ENCODE measurements at regions of chr1 and their contacts with region 1.

Region 1: GRCh38 chr1:162854245-162854882 is 6.6 kb downstream of the CCDC190 start:
- DNase-seq: peak; percentile 50
- ATAC-seq: peak; percentile 73

Region 2: DNA sequence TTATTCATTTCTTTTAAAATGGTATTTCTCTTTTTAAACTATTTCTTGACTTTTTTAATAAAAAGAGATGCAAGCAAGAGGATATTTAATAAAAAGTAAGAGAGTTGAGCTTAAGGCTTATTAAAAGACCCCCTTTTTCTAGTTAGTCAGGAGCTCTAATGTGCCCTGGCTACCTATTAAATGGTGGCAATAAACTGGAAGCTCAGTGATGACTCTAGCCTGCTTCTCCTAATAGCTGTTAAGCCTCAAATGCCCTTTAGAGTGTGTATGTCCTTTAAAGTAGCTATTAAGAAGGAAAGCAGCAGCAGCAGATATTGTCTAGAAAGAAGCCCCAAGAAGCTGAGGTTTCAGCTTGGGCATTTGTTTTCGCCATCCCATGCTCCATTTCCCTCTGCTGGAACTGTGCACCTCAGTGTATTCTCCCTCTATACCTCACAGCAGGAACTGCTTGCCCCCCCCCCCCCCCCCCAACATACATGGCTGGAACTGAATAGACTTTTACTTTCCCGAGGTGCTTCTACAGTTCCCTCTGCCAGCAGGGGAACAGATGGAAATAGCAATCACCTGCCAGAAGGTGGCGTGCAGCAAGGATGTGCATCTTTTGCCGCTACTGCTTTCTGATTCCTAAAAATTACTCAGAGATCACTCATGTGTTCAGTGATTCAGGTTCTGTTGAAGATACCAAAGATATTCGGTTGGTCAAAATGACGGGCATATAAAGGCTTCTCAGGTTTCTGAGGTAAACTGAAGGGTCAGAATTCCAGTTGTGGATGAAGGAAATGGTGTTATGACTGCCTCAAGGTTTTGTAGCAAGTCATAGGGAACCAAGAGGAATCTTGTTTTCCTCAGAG is 217.3 kb after region 1 on chr1:
- intact Hi-C with region 1: loop called (anchors 10 kb)
- DNase-seq: peak; percentile 53
- ATAC-seq: peak; percentile 70

Region 3: GRCh38 chr1:163315773-163316374 is 461.5 kb after region 1 on chr1:
- intact Hi-C with region 1: loop called (anchors 5 kb)
- DNase-seq: no peak
- ATAC-seq: no peak

Measured in Right ventricle myocardium superior (tissue), 1 donor.